Caco-2 (cell line): ENCODE measurements at regions of chr1 and their contacts with region 1.

Region 1: GRCh38 chr1:87615491-87615890 is 286.8 kb downstream of the LMO4 start:
- DNase-seq: no peak
- H3K4me3 ChIP-seq: no peak overlapping the region
- H3K4me3 Mint-ChIP-seq: no peak overlapping the region
- H3K27ac Mint-ChIP-seq: no peak overlapping the region
- H3K4me1 ChIP-seq: peaks cover 23% of the 10 kb centered on the region
- H3K4me1 Mint-ChIP-seq: peaks cover 20% of the 10 kb centered on the region
- H3K27me3 ChIP-seq: no peaks in the 10 kb centered on the region
- H3K27me3 Mint-ChIP-seq: no peaks in the 10 kb centered on the region
- CTCF ChIP-seq: no peak

Region 2: GRCh38 chr1:87584586-87584985 is 30.9 kb before region 1 on chr1:
- CTCF ChIA-PET with region 1: no interaction called
- POLR2A ChIA-PET with region 1: no interaction called
- intact Hi-C with region 1: loop called (anchors 1 kb)
- DNase-seq: peak; percentile 5 to 36
- H3K4me3 ChIP-seq: no peak overlapping the region
- H3K4me3 Mint-ChIP-seq: no peak overlapping the region
- H3K27ac Mint-ChIP-seq: no peak overlapping the region
- H3K4me1 ChIP-seq: 0 out of 2 replicates have a peak, but pooled peaks cover 5% of the 10 kb centered on the region
- H3K4me1 Mint-ChIP-seq: no peaks in the 10 kb centered on the region
- H3K27me3 ChIP-seq: no peaks in the 10 kb centered on the region
- H3K27me3 Mint-ChIP-seq: no peaks in the 10 kb centered on the region
- CTCF ChIP-seq: no peak

Region 3: DNA sequence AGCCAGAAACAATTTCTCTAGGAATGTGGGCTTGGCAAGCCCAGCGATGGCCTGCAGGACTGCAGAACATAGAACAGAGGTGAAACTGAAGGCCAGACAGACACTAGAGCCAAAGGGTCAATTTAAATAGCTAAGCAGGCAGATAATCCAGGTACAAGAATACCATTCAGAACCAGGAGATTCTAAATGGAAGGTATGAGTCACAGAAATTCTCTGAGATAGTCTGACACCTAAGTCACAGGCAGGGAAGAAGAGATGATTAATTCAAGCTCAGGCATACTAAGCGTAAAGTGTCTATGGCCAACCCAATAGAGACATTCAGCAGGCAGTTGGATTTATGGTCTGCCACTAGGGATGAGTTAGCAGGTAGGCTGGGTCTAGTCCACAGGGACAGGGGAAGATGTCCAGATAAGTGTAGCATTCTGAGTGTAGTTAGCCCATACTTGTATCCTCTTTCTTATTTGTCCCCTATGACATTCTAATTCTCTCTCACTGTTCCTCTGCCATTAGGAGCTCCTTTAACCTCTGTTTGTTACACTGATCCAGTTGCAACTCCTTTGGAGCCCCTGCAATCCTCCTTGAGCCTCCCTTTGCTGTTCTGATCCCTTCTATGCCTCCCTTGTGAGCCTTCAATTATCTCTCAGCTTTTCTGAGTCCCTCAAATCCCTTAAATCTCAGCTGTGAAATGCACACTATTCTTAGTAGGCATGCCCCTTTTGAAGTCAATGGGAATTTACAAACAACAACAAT is 96.9 kb after region 1 on chr1:
- CTCF ChIA-PET with region 1: no interaction called
- POLR2A ChIA-PET with region 1: no interaction called
- intact Hi-C with region 1: loop called (anchors 5 kb)
- DNase-seq: peak; percentile 44 to 68
- H3K4me3 ChIP-seq: no peak overlapping the region
- H3K4me3 Mint-ChIP-seq: peak overlapping the region; percentile 8
- H3K27ac Mint-ChIP-seq: peak overlapping the region; percentile 63
- H3K4me1 ChIP-seq: peaks cover 31% of the 10 kb centered on the region
- H3K4me1 Mint-ChIP-seq: peaks cover 41% of the 10 kb centered on the region
- H3K27me3 ChIP-seq: no peaks in the 10 kb centered on the region
- H3K27me3 Mint-ChIP-seq: no peaks in the 10 kb centered on the region
- CTCF ChIP-seq: no peak

Region 4: DNA sequence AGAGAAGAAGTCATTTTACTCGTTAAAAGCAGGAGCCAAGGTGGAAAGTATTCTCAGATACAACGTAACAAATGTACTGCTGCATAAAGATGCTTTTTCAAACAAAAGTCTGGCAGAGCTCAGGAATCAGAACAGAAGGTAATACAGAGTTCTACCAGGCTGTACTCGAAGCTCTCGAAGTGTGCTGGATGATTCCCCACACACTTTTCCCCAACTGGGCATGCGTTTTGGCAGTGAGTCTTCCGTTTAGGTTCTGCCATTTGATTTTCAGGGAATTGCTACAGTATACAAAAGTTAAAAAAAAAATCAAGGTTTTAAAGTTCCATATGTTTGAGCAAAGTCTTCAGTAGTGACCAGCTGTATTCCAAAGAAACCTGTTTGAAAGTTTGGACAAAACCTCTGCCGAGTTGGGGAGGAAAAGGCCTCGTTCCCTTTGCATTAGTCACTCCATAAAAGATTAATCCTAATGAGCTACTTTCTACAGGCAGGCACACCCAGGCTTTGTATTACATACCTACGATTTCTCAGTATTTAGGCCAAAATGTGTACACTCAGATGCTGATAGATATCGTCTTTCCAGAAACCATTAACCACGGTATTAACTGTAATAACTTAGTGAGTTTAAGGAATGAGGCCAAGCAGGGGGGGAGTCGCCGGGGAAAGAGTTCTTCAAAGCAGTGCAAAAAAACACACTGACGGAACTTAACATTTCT is 190.3 kb after region 1 on chr1:
- CTCF ChIA-PET with region 1: no interaction called
- POLR2A ChIA-PET with region 1: no interaction called
- intact Hi-C with region 1: loop called (anchors 5 kb)
- DNase-seq: peak; percentile 62 to 76
- H3K4me3 ChIP-seq: peak overlapping the region; percentile 34
- H3K4me3 Mint-ChIP-seq: peak overlapping the region; percentile 78
- H3K27ac Mint-ChIP-seq: peak overlapping the region; percentile 95
- H3K4me1 ChIP-seq: peaks cover 38% of the 10 kb centered on the region
- H3K4me1 Mint-ChIP-seq: peaks cover 9% of the 10 kb centered on the region
- H3K27me3 ChIP-seq: no peaks in the 10 kb centered on the region
- H3K27me3 Mint-ChIP-seq: no peaks in the 10 kb centered on the region
- CTCF ChIP-seq: no peak